GM12878 (cell line): ENCODE measurements at regions of chr15 and their contacts with region 1.

Region 1: GRCh38 chr15:81296673-81297072 is 27.3 kb downstream of the STARD5 start:
- DNase-seq: peak; percentile 95
- ATAC-seq: peak; percentile 44
- H3K4me3 ChIP-seq: peak overlapping the region; percentile 75
- H3K27ac ChIP-seq: peak overlapping the region; percentile 99
- H3K4me1 ChIP-seq: peaks cover 60% of the 10 kb centered on the region
- H3K27me3 ChIP-seq: no peaks in the 10 kb centered on the region
- CTCF ChIP-seq: no peak
- EP300 ChIP-seq: peak; percentile 78 to 90; a peak in 3 of 4 replicates
- POLR2A ChIP-seq: peak; percentile 79
- RAD21 ChIP-seq: peak; percentile 19; the same call in 1 of the 2 replicates

Region 2: DNA sequence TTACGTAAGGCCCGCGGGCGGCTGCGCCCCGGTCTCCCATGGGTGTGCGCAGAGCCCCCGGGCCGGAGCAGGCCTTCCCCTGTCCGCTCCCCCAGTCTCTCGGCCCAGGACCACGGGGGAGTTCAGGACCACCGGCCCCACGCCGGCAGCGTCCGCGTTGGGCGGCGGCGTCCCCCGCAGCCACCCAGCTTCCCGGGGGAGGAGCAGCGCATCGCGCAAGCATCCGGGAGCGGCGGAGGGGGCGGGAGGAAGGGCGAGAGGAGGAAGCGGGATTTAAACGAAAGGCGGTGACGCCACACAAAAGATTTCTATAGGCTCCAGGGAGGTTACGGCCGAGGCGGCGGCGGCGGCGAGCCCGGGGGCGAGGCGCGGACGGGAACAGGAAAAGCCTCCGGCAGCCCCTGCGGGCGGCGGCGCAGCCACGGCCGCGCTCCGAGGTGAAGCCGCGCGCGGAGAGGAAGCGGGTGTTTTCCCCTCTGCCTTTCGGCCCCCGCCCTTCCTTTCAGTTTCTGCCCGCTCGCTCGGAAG is 296.0 kb before region 1 on chr15 and contains the start of gene TLNRD1:
- CTCF ChIA-PET with region 1: no interaction called
- POLR2A ChIA-PET with region 1: interaction called, 9 read pairs
- RAD21 ChIA-PET with region 1: interaction called, 4 read pairs
- SMC1A ChIA-PET with region 1: no interaction called
- in situ Hi-C with region 1: loop called (anchors 10 kb)
- intact Hi-C with region 1: loop called (anchors 2 kb)
- DNase-seq: no peak
- ATAC-seq: peak; percentile 74
- H3K4me3 ChIP-seq: peak within 1 kb of the TSS; percentile 87
- H3K27ac ChIP-seq: peak within 1 kb of the TSS; percentile 92
- H3K4me1 ChIP-seq: peaks cover 19% of the 10 kb centered on the region
- H3K27me3 ChIP-seq: no peaks in the 10 kb centered on the region
- CTCF ChIP-seq: no peak
- EP300 ChIP-seq: no peak
- POLR2A ChIP-seq: peak; percentile 92
- RAD21 ChIP-seq: no peak
- polyA plus RNA-seq, gene TLNRD1: 2.5 to 5.7 TPM

Region 3: GRCh38 chr15:81256916-81257315 is 39.8 kb before region 1 on chr15:
- CTCF ChIA-PET with region 1: no interaction called
- POLR2A ChIA-PET with region 1: no interaction called
- RAD21 ChIA-PET with region 1: no interaction called
- SMC1A ChIA-PET with region 1: no interaction called
- in situ Hi-C with region 1: no loop called
- intact Hi-C with region 1: no loop called
- DNase-seq: no peak
- ATAC-seq: no peak
- H3K4me3 ChIP-seq: no peak overlapping the region
- H3K27ac ChIP-seq: no peak overlapping the region
- H3K4me1 ChIP-seq: no peaks in the 10 kb centered on the region
- H3K27me3 ChIP-seq: peaks cover 3 to 4% of the 10 kb centered on the region in 2 experiments; a peak in 2 of 4 replicates
- CTCF ChIP-seq: peak in 2 of 3 experiments; percentile 12 to 25; a peak in 2 of 6 replicates
- EP300 ChIP-seq: no peak
- POLR2A ChIP-seq: no peak
- RAD21 ChIP-seq: peak; percentile 44

Region 4: DNA sequence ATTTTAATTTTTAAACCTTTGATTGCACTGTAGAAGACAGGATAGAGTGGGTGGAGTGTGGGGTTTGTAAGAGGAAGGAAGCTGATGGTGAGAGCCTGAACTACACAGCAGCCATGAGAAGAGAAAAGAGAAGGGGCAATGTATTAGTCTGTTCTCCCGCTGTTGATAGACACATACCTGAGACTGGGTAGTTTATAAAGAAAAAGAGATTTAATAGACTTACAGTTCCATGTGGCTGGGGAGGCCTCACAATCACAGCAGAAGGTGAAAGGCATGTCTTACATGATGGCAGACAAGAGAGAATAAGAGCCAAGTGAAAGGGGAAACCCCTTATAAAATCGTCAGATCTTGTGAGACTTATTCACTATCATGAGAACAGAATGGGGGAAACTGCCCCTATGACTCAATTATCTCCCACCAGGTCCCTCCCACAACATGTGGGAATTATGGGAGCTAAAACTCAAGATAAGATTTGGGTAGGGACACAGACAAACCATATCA is 10.0 kb before region 1 on chr15:
- CTCF ChIA-PET with region 1: interaction called, 50 read pairs
- POLR2A ChIA-PET with region 1: interaction called, 103 read pairs
- RAD21 ChIA-PET with region 1: interaction called, 83 read pairs
- SMC1A ChIA-PET with region 1: interaction called, 107 read pairs
- in situ Hi-C with region 1: no loop called
- intact Hi-C with region 1: no loop called
- DNase-seq: no peak
- ATAC-seq: peak; percentile 33
- H3K4me3 ChIP-seq: no peak overlapping the region
- H3K27ac ChIP-seq: peak overlapping the region; percentile 29; the same call in 1 of the 2 replicates
- H3K4me1 ChIP-seq: peaks cover 38% of the 10 kb centered on the region
- H3K27me3 ChIP-seq: no peaks in the 10 kb centered on the region
- CTCF ChIP-seq: no peak
- EP300 ChIP-seq: no peak
- POLR2A ChIP-seq: no peak
- RAD21 ChIP-seq: no peak

Region 5: GRCh38 chr15:81317642-81318017 is 21.0 kb after region 1 on chr15:
- CTCF ChIA-PET with region 1: interaction called, 4 read pairs
- POLR2A ChIA-PET with region 1: interaction called, 25 read pairs
- RAD21 ChIA-PET with region 1: interaction called, 6 read pairs
- SMC1A ChIA-PET with region 1: interaction called, 21 read pairs
- in situ Hi-C with region 1: no loop called
- intact Hi-C with region 1: no loop called
- DNase-seq: no peak
- ATAC-seq: no peak
- H3K4me3 ChIP-seq: no peak overlapping the region
- H3K27ac ChIP-seq: no peak overlapping the region; the same call in 1 of the 2 replicates
- H3K4me1 ChIP-seq: peaks cover 35% of the 10 kb centered on the region
- H3K27me3 ChIP-seq: no peaks in the 10 kb centered on the region
- CTCF ChIP-seq: no peak
- EP300 ChIP-seq: no peak
- POLR2A ChIP-seq: no peak
- RAD21 ChIP-seq: no peak

Region 6: DNA sequence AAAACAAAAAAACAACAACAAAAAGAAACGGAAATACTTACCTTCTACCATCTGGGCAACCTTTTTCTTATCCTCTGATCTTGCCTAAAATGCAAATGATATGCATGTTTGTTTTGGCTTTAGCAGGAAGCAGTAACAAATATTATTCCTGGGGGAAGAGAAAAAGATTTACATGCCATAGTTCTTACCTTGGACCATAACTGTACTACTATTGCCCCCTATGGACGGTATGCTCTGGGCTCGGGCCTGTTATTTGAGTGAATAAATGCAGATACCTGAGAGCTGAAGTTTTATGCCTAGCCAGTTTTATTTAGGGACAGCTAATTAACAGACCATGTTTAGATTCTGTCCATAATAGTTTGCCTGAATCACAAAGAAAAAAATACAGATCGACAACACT is 39.9 kb after region 1 on chr15:
- CTCF ChIA-PET with region 1: interaction called, 12 read pairs
- POLR2A ChIA-PET with region 1: no interaction called
- RAD21 ChIA-PET with region 1: interaction called, 18 read pairs
- SMC1A ChIA-PET with region 1: interaction called, 18 read pairs
- in situ Hi-C with region 1: no loop called
- intact Hi-C with region 1: no loop called
- DNase-seq: no peak
- ATAC-seq: peak; percentile 89
- H3K4me3 ChIP-seq: no peak overlapping the region
- H3K27ac ChIP-seq: no peak overlapping the region
- H3K4me1 ChIP-seq: no peaks in the 10 kb centered on the region; the same call in 1 of the 2 replicates
- H3K27me3 ChIP-seq: no peaks in the 10 kb centered on the region
- CTCF ChIP-seq: peak; percentile 57 to 73 (median 66); a peak in 5 of 6 replicates
- EP300 ChIP-seq: no peak
- POLR2A ChIP-seq: no peak
- RAD21 ChIP-seq: peak; percentile 83

Region 7: DNA sequence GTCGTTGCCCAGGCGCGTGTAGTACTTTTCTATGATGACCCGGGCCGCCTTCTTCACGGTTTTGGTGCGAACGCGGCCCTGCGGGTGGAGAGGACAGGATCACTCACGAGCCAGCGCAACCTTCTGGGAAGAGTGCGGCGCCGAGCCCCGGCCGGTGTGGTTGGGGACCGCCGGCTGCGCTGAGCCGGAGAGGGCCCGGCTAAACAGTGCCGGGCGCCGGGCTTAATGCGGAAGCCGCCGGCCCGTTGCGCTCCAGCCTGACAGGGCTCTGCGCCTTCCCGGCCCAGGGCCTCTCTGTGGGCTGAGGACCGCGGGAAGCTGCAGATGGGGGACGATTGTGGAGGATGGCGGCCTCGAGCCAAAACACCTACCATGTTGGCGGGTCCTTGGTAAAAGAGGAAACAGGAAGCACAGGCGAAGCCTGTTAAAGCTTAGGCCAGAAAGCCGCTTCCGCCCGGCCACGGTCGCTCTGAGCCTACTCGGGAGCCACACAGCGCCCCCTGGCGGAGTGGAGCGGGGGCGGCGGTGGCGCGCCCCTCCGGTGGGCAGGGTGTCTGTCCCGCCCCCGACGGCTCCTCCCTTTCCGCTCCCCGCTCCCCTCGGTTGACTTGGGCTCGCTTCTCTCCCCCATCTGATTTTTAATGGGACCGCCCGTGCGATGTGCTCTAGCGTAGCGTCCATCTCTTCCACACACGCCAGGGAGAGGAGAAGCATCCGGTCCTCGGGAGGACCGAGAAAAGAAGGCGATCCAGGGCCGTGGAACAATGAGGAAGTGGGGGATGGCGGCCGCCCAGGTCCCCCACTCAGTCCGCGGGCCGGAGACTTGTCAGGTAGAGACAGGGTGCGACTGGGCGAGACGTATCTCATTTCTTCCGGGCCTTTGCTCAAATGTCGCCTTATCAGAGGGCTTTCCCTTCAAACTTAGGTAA is 1243.6 kb after region 1 on chr15 and contains the start of gene RPS17:
- CTCF ChIA-PET with region 1: no interaction called
- POLR2A ChIA-PET with region 1: no interaction called
- RAD21 ChIA-PET with region 1: no interaction called
- SMC1A ChIA-PET with region 1: no interaction called
- in situ Hi-C with region 1: loop called (anchors 10 kb)
- intact Hi-C with region 1: no loop called
- DNase-seq: peak; percentile 85
- ATAC-seq: peak; percentile 95
- H3K4me3 ChIP-seq: peak within 1 kb of the TSS; percentile 99
- H3K27ac ChIP-seq: peak within 1 kb of the TSS; percentile 91
- H3K4me1 ChIP-seq: 0 out of 2 replicates have a peak, but pooled peaks cover 2% of the 10 kb centered on the region
- H3K27me3 ChIP-seq: no peaks in the 10 kb centered on the region
- CTCF ChIP-seq: peak; percentile 97 to 100 (median 97); a peak in 5 of 6 replicates
- EP300 ChIP-seq: peak; percentile 30 to 52; a peak in 2 of 4 replicates
- POLR2A ChIP-seq: peak; percentile 100
- RAD21 ChIP-seq: peak; percentile 14; the same call in 1 of the 2 replicates
- polyA plus RNA-seq, gene RPS17: 2,736 to 3,665 TPM